Sciatic nerve (tissue), 2 donors: ENCODE measurements at regions of chr10 and their contacts with region 1.

Region 1: GRCh38 chr10:77649333-77650331 is 12.0 kb upstream of the KCNMA1 start:
- DNase-seq: no peak
- ATAC-seq: no peak

Region 2: GRCh38 chr10:75880031-75880775 is 1769.4 kb before region 1 on chr10:
- intact Hi-C with region 1: no loop called
- DNase-seq: no peak
- ATAC-seq: no peak

Region 3: DNA sequence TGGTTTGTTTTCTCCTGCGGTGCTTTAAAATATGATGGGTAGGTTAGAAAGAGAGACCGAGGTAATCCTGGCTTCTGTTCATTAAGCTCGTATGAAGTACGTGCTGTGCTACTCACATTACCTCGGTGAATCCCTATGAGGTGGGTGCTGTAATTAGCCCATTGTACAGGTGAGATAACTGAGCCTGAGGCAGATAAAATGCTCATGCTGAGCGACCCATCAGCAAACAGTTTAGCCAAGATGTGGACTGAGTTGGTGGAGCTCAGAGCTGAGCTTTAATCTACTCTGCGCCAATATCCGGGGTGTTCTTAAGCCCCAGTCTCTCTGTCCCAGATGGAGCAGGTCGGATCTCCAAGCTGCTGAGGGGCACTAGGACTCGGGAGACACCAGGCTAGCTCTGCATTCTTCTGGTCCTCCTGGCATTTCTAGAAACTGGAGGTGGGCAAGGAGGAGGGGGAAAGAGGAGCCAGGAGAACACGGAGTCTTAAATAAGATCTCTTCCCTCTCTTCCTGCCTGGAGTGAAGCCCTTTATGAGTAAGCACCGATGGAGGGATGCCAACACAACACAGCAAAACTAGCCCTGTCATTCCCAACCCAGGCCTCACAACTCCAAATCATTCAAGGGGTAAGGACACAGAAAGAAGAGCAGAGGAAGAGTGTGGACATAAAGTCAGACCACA is 470.5 kb before region 1 on chr10:
- intact Hi-C with region 1: loop called (anchors 5 kb)
- DNase-seq: no peak
- ATAC-seq: peak; percentile 48

Region 4: DNA sequence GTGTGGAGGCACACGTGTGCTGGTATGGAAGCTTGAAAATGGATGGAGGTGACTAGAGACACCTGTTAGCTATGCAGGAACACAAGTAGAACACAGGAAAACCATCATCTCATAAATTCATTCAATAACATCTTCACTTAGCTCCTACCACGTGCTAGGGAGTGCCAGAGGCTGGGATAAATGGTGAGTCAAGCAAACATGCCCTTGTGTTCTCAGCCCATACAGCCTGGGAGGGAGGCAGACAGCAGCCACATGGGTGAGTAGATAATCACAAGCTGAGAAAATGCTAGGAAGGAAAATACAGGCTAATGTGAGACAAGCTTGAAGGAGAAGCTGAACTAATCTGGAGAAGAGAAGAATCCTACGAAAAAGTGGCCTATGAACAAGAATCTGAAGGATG is 951.1 kb after region 1 on chr10:
- intact Hi-C with region 1: no loop called
- DNase-seq: no peak
- ATAC-seq: peak; percentile 91